Activated CD8-positive, alpha-beta T cell treated with anti-CD3 and anti-CD28 coated beads for 36 hours (primary cell): ENCODE measurements at regions of chr13 and their contacts with region 1.

Region 1: GRCh38 chr13:27889471-27889870 is 30.3 kb upstream of the PDX1 start:
- DNase-seq: no peak
- ATAC-seq: no peak
- H3K4me3 Mint-ChIP-seq: no peak overlapping the region
- H3K27ac Mint-ChIP-seq: no peak overlapping the region
- H3K4me1 Mint-ChIP-seq: no peaks in the 10 kb centered on the region
- H3K27me3 Mint-ChIP-seq: peaks cover 19% of the 10 kb centered on the region
- CTCF ChIP-seq: no peak

Region 2: GRCh38 chr13:27704681-27705080 is 184.8 kb before region 1 on chr13:
- CTCF ChIA-PET with region 1: no interaction called
- POLR2A ChIA-PET with region 1: no interaction called
- intact Hi-C with region 1: no loop called
- DNase-seq: peak; percentile 3
- ATAC-seq: peak; percentile 67
- H3K4me3 Mint-ChIP-seq: no peak overlapping the region
- H3K27ac Mint-ChIP-seq: no peak overlapping the region
- H3K4me1 Mint-ChIP-seq: peaks cover 5% of the 10 kb centered on the region
- H3K27me3 Mint-ChIP-seq: peaks cover 8% of the 10 kb centered on the region
- CTCF ChIP-seq: no peak

Region 3: DNA sequence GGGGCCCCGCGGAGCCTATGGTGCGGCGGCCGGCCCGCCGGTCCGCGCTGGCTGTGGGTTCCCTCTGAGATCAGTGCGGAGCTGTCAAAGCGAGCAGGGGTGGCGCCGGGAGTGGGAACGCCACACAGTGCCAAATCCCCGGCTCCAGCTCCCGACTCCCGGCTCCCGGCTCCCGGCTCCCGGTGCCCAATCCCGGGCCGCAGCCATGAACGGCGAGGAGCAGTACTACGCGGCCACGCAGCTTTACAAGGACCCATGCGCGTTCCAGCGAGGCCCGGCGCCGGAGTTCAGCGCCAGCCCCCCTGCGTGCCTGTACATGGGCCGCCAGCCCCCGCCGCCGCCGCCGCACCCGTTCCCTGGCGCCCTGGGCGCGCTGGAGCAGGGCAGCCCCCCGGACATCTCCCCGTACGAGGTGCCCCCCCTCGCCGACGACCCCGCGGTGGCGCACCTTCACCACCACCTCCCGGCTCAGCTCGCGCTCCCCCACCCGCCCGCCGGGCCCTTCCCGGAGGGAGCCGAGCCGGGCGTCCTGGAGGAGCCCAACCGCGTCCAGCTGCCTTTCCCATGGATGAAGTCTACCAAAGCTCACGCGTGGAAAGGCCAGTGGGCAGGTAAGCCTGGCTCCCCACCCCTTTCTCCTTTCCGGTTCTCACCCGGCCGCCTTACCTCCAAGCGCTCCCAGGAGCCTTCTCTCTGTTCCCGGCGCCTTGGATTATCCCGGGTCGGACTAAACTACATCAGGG is 30.6 kb after region 1 on chr13 and contains the start of gene PDX1:
- CTCF ChIA-PET with region 1: no interaction called
- POLR2A ChIA-PET with region 1: no interaction called
- intact Hi-C with region 1: no loop called
- DNase-seq: peak; percentile 54
- ATAC-seq: peak; percentile 12
- H3K4me3 Mint-ChIP-seq: peak within 1 kb of the TSS; percentile 67
- H3K27ac Mint-ChIP-seq: no peak within 1 kb of the TSS
- H3K4me1 Mint-ChIP-seq: peaks cover 36% of the 10 kb centered on the region
- H3K27me3 Mint-ChIP-seq: peaks cover 77% of the 10 kb centered on the region
- CTCF ChIP-seq: no peak
- total RNA-seq, gene PDX1: not detected

Region 4: DNA sequence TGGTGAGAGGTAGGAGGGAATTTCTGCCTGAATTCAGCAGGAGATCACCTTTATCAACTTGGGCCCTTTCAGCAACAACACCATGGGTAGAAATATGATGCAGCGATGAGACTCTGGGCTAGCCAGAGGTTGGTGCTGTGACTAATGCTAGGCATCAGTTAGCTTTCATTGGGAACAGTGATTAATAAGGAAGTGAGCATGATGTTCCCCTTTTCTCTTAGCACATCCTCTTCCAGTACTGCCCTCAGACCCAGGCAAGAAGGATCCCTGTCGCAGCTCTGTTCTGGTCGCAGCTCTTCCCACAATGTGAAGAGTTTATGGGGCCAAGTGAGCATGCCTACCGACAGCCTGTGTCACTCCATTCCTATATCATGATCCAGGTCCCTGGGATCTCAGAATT is 505.0 kb after region 1 on chr13:
- CTCF ChIA-PET with region 1: no interaction called
- POLR2A ChIA-PET with region 1: no interaction called
- intact Hi-C with region 1: loop called (anchors 10 kb)
- DNase-seq: no peak
- ATAC-seq: no peak
- H3K4me3 Mint-ChIP-seq: no peak overlapping the region
- H3K27ac Mint-ChIP-seq: no peak overlapping the region
- H3K4me1 Mint-ChIP-seq: no peaks in the 10 kb centered on the region
- H3K27me3 Mint-ChIP-seq: no peaks in the 10 kb centered on the region
- CTCF ChIP-seq: no peak